Activated T-helper 1 cell treated with anti-CD3 and anti-CD28 coated beads, Interleukin-12 subunit alpha, Interleukin-12 subunit beta, Interleukin-2, Interleukin-4 antibody, amounts not matched to agents 30 ng/mL and 10 ng/mL and 1 ng/mL, durations not matched to agents 14 hours and 24 hours and 36 hours (primary cell): ENCODE measurements at regions of chr7 and their contacts with region 1.

Region 1: DNA sequence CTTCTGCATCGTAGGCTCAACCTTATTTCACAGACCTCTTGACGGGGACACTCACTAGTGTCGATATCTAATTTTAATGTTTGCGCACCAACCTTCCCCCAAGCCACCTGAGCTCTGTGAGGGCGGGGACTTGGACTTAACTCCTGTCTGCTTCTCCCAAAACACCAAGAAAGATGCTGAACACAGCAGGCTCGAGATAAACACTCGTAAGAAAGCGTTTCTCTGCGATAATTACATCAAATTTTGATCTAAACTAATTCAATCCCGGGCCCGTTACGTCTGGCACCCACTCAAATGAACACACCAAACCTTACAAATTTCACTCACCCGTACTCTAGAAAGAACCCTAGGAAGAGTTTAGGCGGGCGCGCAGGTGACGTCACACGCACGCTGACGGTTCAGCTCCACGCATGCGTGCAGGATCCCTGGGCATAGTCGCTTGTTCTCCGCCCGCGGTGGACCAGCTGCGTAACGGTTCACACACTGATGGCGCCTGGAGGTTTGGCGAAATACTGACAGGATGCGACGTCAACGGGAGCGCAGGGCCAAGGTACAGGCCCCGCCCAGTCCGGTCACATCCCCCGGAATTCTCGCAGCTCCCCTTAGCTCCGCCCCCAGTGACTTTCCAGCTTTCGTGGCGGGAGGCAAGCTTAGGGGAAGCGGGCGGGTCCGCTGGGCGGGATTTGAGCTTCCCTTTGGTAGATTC is at the start of gene POT1:
- DNase-seq: peak; percentile 95
- H3K4me3 Mint-ChIP-seq: peak within 1 kb of the TSS; percentile 97
- H3K27ac Mint-ChIP-seq: peak within 1 kb of the TSS; percentile 87
- H3K4me1 Mint-ChIP-seq: peaks cover 39% of the 10 kb centered on the region
- H3K27me3 Mint-ChIP-seq: peaks cover 2% of the 10 kb centered on the region
- total RNA-seq, gene POT1: 27.1 and 31.1 TPM in 2 replicates

Region 2: GRCh38 chr7:123534383-123535260 is 1395.0 kb before region 1 on chr7 and contains the start of gene IQUB:
- intact Hi-C with region 1: loop called (anchors 1 kb)
- DNase-seq: peak; percentile 89
- H3K4me3 Mint-ChIP-seq: peak within 1 kb of the TSS; percentile 91
- H3K27ac Mint-ChIP-seq: peak within 1 kb of the TSS; percentile 88
- H3K4me1 Mint-ChIP-seq: peaks cover 26% of the 10 kb centered on the region
- H3K27me3 Mint-ChIP-seq: peaks cover 30% of the 10 kb centered on the region
- total RNA-seq, gene IQUB: 0.44 TPM in 1 of 2 replicates, not detected in the other

Region 3: GRCh38 chr7:124893140-124893827 is 36.3 kb before region 1 on chr7:
- intact Hi-C with region 1: loop called (anchors 1 kb)
- DNase-seq: no peak
- H3K4me3 Mint-ChIP-seq: no peak overlapping the region
- H3K27ac Mint-ChIP-seq: peak overlapping the region; percentile 34
- H3K4me1 Mint-ChIP-seq: peaks cover 8% of the 10 kb centered on the region
- H3K27me3 Mint-ChIP-seq: no peaks in the 10 kb centered on the region

Region 4: GRCh38 chr7:125010540-125010939 is 80.9 kb after region 1 on chr7:
- intact Hi-C with region 1: no loop called
- DNase-seq: no peak
- H3K4me3 Mint-ChIP-seq: no peak overlapping the region
- H3K27ac Mint-ChIP-seq: no peak overlapping the region
- H3K4me1 Mint-ChIP-seq: no peaks in the 10 kb centered on the region
- H3K27me3 Mint-ChIP-seq: no peaks in the 10 kb centered on the region

Region 5: GRCh38 chr7:126700807-126701604 is 1771.4 kb after region 1 on chr7:
- intact Hi-C with region 1: loop called (anchors 10 kb)
- DNase-seq: peak; percentile 71
- H3K4me3 Mint-ChIP-seq: no peak overlapping the region
- H3K27ac Mint-ChIP-seq: no peak overlapping the region
- H3K4me1 Mint-ChIP-seq: peaks cover 13% of the 10 kb centered on the region
- H3K27me3 Mint-ChIP-seq: peaks cover 24% of the 10 kb centered on the region